ENCODE measurements at regions of chr11 and their contacts with region 1.

Region 1: DNA sequence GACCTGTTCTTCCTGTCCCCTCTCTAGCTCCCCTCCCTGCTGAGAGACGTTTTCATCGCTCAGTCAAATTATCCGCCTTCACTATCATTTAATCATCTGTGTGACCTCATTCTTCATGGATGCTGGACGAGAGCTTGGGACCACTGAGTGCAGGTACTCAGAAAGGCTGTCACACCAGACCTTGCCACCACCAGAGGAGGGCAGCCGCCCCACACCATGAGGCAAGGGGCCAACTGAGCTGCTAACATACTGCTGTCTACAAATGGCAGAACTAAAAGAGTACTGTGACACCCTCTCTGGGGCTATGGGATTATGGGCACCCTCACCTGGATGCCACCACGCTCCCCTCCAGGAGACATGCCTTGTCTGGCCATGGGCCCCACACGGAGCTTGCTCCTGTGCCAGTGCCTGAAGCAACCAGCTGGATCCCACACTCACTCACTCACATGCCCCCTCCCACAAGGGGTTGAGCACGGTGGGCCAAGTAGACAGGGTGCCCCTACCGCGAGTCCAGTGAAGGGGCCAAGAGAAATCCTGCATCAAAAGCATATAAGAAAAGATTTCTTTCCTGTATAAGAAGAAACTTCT is 670.0 kb upstream of the CCDC90B start:
- DNase-seq: no peak
- H3K4me3 ChIP-seq: no peak overlapping the region
- CTCF ChIP-seq: no peak
- POLR2A ChIP-seq: no peak

Region 2: DNA sequence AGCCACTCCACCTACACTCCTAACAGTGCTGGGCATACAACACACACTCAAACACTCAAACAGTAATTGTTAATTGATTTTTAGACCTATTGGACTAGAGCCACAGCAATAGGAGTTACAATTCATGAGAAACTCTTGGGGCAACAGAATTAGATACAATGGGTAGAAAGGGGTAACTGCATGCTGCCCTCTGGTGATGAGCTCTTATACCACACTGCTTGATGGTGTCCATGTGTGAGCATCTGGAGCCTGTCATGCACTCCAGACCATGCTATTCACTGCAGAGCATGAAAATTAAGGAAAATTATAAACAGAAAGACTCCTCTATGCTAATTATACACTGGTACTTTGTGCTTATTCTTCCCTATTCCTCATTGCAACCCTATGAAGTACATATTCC is 305.5 kb after region 1 on chr11:
- intact Hi-C with region 1: loop called (anchors 5 kb)
- DNase-seq: no peak
- H3K4me3 ChIP-seq: no peak overlapping the region
- CTCF ChIP-seq: no peak
- POLR2A ChIP-seq: no peak